ENCODE measurements at regions of chr11 and their contacts with region 1.

Region 1: GRCh38 chr11:1832211-1832919 is 2.4 kb upstream of the SYT8 start:
- DNase-seq: no peak
- ATAC-seq: peak; percentile 62; the same call in 1 of the 2 replicates
- H3K4me3 ChIP-seq: no peak overlapping the region
- H3K27ac ChIP-seq: no peak overlapping the region
- H3K4me1 ChIP-seq: peaks cover 8% of the 10 kb centered on the region
- H3K27me3 ChIP-seq: peaks cover 16% of the 10 kb centered on the region; the same call in 1 of the 2 replicates
- CTCF ChIP-seq: peak; percentile 80
- POLR2A ChIP-seq: no peak
- RAD21 ChIP-seq: peak; percentile 83

Region 2: DNA sequence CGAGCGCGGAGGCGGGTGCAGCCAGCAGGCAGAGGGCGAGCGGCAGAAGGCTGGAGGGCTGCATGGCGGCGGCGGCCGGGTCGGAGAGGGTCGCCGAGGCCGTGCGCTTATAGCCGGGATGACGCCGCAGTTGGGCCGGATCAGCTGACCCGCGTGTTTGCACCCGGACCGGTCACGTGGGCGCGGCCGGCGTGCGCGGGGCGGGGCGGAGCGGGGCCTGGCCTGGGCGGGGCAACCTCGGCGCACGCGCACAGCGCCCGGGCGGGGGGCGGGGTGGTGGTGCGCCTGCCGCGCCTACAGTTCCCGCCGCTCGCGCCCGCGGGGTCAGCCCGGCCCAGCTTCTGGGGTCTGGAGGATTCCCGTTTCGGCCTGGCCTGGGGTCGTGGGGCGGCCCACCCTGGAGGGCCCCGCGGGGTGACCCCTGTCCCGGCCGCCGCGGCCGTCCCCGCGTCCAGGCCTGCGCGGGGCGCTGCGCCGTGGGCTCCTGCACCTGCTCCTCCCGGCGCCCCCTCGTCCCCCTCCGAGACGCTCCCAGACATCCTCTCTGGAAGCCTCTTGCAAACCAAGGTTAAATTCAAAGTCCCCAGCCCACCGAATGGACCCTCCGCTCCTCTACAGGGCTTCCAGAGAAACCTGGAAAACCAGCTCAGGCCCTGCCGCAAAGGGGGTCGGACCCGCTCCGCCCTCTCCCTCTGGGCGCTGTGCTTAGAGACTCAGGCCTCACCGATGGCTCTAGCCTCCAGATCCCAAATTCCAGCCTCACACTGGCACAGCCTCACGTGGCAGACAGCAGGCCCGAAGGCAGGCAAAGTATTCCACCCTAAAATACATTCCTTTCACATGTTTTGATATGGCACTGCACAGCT is 68.3 kb before region 1 on chr11 and contains the start of gene CTSD:
- CTCF ChIA-PET with region 1: interaction called, 4 read pairs
- POLR2A ChIA-PET with region 1: no interaction called
- dilution Hi-C with region 1: no loop called
- in situ Hi-C with region 1: no loop called
- intact Hi-C with region 1: loop called (anchors 2 kb)
- DNase-seq: peak; percentile 69
- ATAC-seq: peak; percentile 96
- H3K4me3 ChIP-seq: peak within 1 kb of the TSS; percentile 96
- H3K27ac ChIP-seq: peak within 1 kb of the TSS; percentile 85
- H3K4me1 ChIP-seq: peaks cover 23% of the 10 kb centered on the region
- H3K27me3 ChIP-seq: no peaks in the 10 kb centered on the region
- CTCF ChIP-seq: no peak
- POLR2A ChIP-seq: no peak
- RAD21 ChIP-seq: no peak
- total RNA-seq, gene CTSD: 38.3 and 39.8 TPM in 2 replicates

Measured in IMR-90 (cell line).